GM23248 (cell line): ENCODE measurements at regions of chr5 and their contacts with region 1.

Region 1: DNA sequence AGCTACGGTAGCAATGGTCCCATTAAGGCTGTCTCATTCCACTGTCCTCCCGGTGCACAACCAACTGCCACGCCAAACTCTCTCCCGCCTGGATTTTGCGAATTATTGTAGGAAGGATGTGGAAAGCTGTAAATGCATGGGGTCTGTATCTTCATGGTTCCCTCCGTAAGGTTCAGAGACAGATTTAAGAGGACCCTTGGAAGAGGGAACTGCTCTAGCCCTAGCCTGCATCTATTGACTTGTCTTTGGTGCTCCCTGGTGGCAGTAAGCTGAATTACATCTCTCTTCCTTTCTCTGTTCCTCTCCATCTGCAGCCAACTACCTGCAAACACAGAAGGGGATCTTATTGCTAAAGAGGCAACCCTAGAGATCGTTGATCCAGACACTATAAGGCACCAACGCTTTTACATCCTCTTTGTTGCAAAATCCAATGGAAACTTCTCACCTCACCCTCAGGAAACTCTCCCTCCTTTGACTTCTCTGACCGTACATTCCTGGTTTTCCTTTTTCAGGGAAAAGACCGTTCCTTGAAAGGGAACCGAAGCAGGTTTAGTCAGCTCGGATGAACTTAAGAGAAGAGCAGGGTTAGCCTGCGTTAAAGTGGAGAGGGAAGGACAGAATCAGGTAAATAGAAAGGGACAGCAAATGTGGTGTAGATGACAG is 11.9 kb downstream of the CAPSL start:
- DNase-seq: peak; percentile 59
- H3K4me3 ChIP-seq: peak overlapping the region; percentile 44
- H3K27ac ChIP-seq: no peak overlapping the region
- H3K4me1 ChIP-seq: peaks cover 23% of the 10 kb centered on the region
- H3K27me3 ChIP-seq: peaks cover 27% of the 10 kb centered on the region

Region 2: GRCh38 chr5:35202319-35203111 is 724.0 kb before region 1 on chr5:
- in situ Hi-C with region 1: loop called (anchors 25 kb)
- DNase-seq: peak; percentile 76
- H3K4me3 ChIP-seq: no peak overlapping the region
- H3K27ac ChIP-seq: no peak overlapping the region
- H3K4me1 ChIP-seq: peaks cover 31% of the 10 kb centered on the region
- H3K27me3 ChIP-seq: no peaks in the 10 kb centered on the region

Region 3: GRCh38 chr5:35651002-35651756 is 275.3 kb before region 1 on chr5:
- in situ Hi-C with region 1: loop called (anchors 5 kb)
- DNase-seq: peak; percentile 67
- H3K4me3 ChIP-seq: no peak overlapping the region
- H3K27ac ChIP-seq: no peak overlapping the region
- H3K4me1 ChIP-seq: no peaks in the 10 kb centered on the region
- H3K27me3 ChIP-seq: no peaks in the 10 kb centered on the region

Region 4: DNA sequence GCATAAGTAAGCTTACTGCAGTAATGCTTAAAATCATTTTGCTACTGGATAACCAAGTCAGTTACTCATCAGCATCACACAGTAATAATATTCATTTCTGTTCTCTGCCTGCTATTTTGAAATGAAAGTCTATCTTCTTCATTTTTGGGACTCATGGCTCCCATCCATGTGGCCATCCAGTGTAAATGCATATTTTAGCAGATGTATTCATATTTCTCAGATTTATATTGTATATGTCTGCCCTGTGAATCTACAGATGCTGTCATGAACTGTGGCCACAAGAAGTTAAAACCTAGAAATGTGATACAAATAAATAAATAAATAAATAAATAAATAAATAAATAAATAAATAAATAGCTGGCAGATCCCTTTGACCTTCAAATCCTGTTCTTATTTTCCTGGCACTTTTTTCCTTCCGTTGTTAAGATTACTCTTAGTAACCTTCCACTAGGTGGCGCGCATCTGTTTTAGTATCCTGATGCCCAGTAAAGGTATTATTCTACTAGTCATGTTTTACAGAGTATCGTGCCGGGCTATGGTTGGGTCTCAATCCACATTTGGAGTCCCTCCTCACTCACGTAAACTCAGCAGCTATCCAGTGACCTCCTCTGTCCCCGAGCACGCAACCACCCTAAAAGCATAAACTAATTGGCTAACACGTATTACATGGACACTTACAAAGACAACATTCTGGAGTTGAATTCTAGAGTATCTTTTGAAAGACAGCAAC is 149.0 kb before region 1 on chr5:
- in situ Hi-C with region 1: loop called (anchors 10 kb)
- DNase-seq: peak; percentile 96
- H3K4me3 ChIP-seq: no peak overlapping the region
- H3K27ac ChIP-seq: no peak overlapping the region
- H3K4me1 ChIP-seq: peaks cover 40% of the 10 kb centered on the region
- H3K27me3 ChIP-seq: no peaks in the 10 kb centered on the region

Region 5: GRCh38 chr5:36006163-36006562 is 79.6 kb after region 1 on chr5:
- in situ Hi-C with region 1: no loop called
- DNase-seq: no peak
- H3K4me3 ChIP-seq: no peak overlapping the region
- H3K27ac ChIP-seq: no peak overlapping the region
- H3K4me1 ChIP-seq: no peaks in the 10 kb centered on the region
- H3K27me3 ChIP-seq: 0 out of 2 replicates have a peak, but pooled peaks cover 5% of the 10 kb centered on the region